ENCODE measurements at regions of chr2 and their contacts with region 1.

Region 1: DNA sequence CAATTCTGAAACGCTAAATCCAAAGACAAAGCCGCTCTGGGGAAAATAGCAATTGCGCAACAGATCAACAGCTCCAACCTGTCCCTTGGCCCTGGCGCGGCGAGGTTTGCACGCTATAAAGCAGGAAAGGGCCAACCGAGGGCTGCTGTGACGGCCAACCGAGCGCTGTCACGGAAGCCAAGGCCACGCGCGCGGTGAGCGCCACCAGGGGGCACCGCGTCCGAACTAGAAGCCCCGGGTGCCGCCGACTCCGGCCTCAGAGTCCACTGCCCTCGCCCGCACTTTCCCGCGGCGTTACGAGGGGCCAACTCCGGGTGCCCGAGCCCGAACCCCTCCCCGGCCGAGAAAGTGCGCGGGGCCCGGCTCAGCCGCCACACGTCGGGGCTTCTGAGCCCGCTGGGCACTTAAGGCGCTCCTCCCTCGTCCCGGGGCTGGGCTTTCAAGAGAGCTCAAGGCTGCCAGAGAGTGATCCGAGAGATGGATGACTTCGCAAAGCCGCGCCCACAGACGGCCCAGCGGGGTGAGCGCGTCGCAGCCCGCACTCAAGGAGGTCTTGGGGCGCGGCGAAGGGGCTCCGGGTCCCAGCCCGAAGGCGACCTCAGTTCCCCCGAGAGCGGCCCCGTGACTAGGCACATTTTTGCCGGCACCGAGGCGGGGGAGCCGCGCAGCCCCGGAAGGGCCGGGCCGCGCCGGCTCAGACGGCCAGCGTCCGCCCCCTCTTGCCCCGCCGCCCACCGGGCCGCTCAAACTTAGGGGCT is 897 bp downstream of the NFE2L2 start:
- DNase-seq: peak; percentile 99 to 100
- ATAC-seq: peak; percentile 82 to 84 (median 83)
- H3K4me3 ChIP-seq: peak overlapping the region; percentile 86
- H3K27ac ChIP-seq: peak overlapping the region; percentile 99
- H3K4me1 ChIP-seq: peaks cover 44% of the 10 kb centered on the region
- H3K27me3 ChIP-seq: no peaks in the 10 kb centered on the region
- CTCF ChIP-seq: peak; percentile 88

Region 2: DNA sequence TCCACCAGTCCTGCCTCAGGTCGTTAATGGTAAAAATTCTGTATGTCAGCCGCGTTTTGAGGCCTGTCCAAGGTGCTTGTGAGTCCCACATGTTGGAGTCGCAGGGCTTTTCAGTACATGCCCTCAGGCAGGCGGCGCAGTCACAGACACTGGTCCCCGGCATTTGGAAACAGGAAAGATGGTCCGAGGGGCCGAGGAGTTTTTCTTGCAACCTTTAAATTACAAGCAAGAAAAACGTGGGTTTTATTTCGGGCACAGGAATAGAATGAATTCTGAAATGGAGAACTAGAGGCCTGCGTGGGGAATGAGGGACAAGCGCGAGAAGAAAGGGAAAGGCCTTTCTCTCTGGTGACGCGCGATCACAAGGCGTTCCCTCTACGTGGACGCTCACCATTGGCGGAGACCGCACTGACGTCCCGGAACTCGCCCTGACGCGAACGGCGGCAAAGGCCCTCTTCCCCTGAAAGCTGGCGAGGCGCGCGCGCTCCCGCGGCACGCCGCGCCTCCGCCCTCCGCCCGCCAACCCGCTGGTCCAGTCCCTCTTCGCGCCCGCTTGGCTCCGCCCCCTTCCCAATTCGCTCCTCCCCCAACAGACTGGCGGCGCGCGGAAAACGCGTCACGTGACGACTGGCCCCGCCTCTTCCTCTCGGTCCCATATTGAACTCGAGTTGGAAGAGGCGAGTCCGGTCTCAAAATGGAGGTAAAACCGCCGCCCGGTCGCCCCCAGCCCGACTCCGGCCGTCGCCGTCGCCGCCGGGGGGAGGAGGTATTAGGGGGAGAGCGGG is 51.3 kb before region 1 on chr2 and contains the start of gene HNRNPA3:
- intact Hi-C with region 1: loop called (anchors 1 to 2 kb)
- DNase-seq: peak; percentile 99 to 100
- ATAC-seq: peak; percentile 91 to 94 (median 93)
- H3K4me3 ChIP-seq: peak within 1 kb of the TSS; percentile 83
- H3K27ac ChIP-seq: peak within 1 kb of the TSS; percentile 95
- H3K4me1 ChIP-seq: peaks cover 41% of the 10 kb centered on the region
- H3K27me3 ChIP-seq: no peaks in the 10 kb centered on the region
- CTCF ChIP-seq: no peak
- total RNA-seq, gene HNRNPA3: 72.8 to 125 (median 91.0) TPM

Region 3: DNA sequence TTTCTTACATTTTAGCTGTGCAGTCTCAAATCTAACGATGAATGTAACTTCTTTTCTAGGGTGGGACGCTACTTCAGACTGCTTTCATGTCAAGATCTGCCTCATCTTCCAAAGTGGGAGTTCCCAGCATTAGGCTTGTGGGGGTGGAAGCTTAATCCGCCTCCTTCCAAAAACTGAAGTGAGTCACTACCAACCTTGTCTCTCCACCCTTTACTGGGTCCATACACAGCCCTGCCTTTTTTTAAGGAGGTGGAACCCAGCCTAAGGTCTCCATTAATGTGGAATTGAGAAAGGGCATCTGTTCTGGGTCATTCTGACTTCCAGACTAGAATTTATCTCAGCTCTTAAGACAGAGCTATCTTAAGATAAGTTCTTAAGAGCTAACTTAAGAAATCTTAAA is 42.9 kb after region 1 on chr2:
- intact Hi-C with region 1: no loop called
- DNase-seq: no peak
- ATAC-seq: no peak
- H3K4me3 ChIP-seq: no peak overlapping the region
- H3K27ac ChIP-seq: no peak overlapping the region
- H3K4me1 ChIP-seq: no peaks in the 10 kb centered on the region
- H3K27me3 ChIP-seq: no peaks in the 10 kb centered on the region
- CTCF ChIP-seq: no peak

Region 4: DNA sequence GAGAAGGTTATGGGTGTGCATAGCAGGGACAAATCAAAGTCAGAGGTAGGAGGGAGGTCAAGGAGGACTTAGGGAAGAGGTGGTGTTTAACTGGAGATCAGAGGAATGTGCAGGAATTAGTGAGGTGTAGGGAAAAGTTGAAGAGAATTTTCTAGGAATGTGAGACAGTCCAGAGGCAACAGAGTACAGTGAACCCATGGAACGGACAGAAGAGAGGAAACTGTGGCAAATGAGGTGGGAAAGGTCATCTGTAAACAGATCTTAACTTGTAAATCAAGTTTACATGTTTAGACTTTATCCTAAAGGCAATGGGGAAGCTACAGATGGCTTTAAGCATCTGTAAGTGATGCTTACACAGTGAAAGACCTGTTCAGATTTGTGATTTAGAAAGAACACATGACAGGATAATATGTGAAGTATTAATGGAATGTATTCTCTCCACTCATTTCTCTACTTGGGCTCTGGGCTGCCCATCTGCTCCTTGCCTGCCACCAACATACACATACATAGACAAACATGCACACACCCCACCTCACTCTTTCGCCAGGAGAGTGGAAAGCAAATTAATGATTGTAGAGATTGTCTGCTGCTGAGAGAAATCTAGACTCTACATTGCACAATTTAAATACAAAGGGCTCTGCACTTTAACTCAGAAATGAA is 61.8 kb after region 1 on chr2:
- intact Hi-C with region 1: loop called in 1 of 2 experiments (anchors 5 kb)
- DNase-seq: no peak
- ATAC-seq: no peak
- H3K4me3 ChIP-seq: no peak overlapping the region
- H3K27ac ChIP-seq: no peak overlapping the region
- H3K4me1 ChIP-seq: no peaks in the 10 kb centered on the region
- H3K27me3 ChIP-seq: no peaks in the 10 kb centered on the region
- CTCF ChIP-seq: no peak

Region 5: DNA sequence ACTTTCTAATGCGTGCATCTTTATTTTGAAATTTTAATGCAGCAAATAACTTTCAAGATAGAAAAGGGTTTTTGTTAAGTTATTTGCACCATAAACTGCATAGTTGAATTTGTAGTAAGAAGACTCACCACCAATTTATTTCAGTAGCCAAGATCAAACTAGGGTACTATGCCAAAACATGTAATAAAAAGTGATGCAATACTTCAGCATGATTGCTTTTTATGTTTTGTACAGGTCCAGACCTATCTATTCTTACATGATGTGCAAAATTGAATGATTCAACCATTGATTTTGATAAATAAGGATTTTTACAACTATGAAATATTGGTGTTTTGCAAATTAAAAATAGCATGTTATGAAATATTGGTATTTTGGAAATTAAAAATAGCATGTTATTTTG is 155.6 kb after region 1 on chr2:
- intact Hi-C with region 1: loop called in 1 of 2 experiments (anchors 5 kb)
- DNase-seq: no peak
- ATAC-seq: peak in 2 of 4 donors; percentile 59 to 73
- H3K4me3 ChIP-seq: no peak overlapping the region
- H3K27ac ChIP-seq: no peak overlapping the region
- H3K4me1 ChIP-seq: peaks cover 28% of the 10 kb centered on the region
- H3K27me3 ChIP-seq: no peaks in the 10 kb centered on the region
- CTCF ChIP-seq: no peak

Region 6: DNA sequence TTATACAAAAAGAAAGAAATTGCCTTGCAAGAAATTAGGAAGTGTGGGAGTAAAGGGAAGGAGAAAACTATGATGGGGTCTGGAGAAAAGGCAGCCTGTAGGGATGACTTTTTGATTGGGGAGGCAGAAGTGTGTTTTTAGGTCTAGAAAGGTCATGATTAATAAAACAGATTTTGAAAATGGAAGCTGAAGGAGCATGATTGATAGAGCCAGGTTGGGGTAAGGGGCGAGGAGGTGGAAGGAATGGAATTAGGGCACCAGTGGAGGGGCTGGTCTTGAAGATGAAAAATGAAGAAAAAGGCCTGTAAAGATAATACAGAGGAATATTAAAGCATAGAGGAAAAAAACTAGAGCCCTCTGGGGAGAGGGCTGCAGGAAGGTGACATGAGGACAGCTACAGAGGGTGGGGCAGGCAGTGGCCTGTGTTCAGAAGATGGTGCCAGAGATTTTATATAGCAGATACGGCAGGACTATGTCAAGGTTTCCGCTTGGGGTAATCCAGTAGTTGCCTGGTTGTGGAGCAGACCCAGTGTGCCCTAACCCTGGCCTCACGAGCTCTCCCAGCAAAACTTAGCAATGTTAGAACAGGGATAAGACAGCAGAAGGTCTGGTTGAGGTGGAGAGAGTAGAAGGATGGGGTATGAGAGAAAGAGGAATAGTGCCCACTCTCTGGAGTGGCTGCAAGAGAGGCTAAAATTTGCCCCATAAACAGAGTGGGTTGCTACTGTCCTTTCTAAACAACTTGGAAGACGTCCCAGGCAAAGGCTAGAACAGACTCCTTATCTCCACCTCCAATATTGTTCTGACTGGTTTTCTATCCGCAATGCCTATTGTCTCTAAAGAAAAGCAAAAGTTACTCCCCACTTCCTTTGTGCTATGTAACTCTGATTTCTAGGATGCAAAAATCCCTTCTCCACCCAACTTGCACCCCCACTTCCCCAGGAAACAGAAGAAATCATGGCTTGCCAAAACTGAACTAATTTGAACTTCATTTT is 416.3 kb after region 1 on chr2:
- intact Hi-C with region 1: no loop called
- DNase-seq: no peak
- ATAC-seq: peak in 1 of 4 donors; percentile 37
- H3K4me3 ChIP-seq: no peak overlapping the region
- H3K27ac ChIP-seq: no peak overlapping the region
- H3K4me1 ChIP-seq: no peaks in the 10 kb centered on the region
- H3K27me3 ChIP-seq: no peaks in the 10 kb centered on the region
- CTCF ChIP-seq: no peak

Region 7: DNA sequence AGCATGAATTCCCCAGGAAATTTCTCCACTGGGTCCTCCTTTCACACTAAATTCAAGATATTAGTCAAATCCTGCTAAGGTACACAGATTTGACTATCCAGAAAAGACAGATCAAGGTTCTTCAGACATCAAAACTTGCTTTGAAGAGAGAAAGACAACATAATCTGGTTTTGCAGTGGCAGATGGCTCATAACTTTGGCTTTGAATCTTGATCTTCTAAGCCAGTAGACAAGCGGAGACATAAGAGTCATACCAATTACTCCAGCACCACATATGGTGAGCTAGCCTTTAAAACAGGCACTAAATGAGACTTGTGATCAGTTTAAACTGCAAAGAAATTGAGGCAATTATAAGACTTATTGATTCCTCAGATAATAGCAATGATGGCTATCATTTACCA is 779.6 kb after region 1 on chr2:
- intact Hi-C with region 1: no loop called
- DNase-seq: no peak
- ATAC-seq: no peak
- H3K4me3 ChIP-seq: no peak overlapping the region
- H3K27ac ChIP-seq: no peak overlapping the region
- H3K4me1 ChIP-seq: no peaks in the 10 kb centered on the region
- H3K27me3 ChIP-seq: no peaks in the 10 kb centered on the region
- CTCF ChIP-seq: no peak

Measured in psoas muscle (tissue), 8 donors.